PC-3 (cell line): ENCODE measurements at regions of chr11 and their contacts with region 1.

Region 1: GRCh38 chr11:18650859-18651557 is 16.9 kb upstream of the SPTY2D1 start:
- DNase-seq: peak; percentile 62
- ATAC-seq: peak; percentile 51; the same call in 1 of the 2 replicates
- H3K4me3 ChIP-seq: no peak overlapping the region
- H3K27ac ChIP-seq: no peak overlapping the region
- H3K4me1 ChIP-seq: no peaks in the 10 kb centered on the region
- H3K27me3 ChIP-seq: no peaks in the 10 kb centered on the region
- CTCF ChIP-seq: peak; percentile 70

Region 2: DNA sequence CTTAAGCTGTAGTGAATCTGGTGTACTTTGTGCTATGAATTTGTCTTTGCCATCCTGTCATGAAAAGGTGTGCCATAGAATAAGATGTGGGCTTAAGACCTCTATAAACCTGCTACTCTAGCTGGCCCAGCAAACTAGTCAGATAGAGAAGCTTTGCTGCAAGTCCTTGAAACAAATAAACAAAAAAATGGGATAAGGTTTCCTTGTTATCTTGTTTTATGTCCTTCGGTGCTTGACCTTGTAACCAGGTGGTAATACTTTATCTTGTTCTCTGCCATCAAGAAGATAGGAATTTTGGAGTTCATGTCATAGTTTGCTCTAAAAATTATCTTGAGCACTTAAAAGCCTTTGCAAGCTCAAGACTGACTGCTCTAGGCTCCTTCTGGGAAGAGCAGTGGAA is 33.3 kb after region 1 on chr11:
- CTCF ChIA-PET with region 1: no interaction called
- POLR2A ChIA-PET with region 1: interaction called, 10 read pairs
- intact Hi-C with region 1: no loop called
- DNase-seq: no peak
- ATAC-seq: no peak
- H3K4me3 ChIP-seq: no peak overlapping the region
- H3K27ac ChIP-seq: no peak overlapping the region
- H3K4me1 ChIP-seq: peaks cover 12% of the 10 kb centered on the region; the same call in 1 of the 2 replicates
- H3K27me3 ChIP-seq: no peaks in the 10 kb centered on the region
- CTCF ChIP-seq: no peak

Region 3: DNA sequence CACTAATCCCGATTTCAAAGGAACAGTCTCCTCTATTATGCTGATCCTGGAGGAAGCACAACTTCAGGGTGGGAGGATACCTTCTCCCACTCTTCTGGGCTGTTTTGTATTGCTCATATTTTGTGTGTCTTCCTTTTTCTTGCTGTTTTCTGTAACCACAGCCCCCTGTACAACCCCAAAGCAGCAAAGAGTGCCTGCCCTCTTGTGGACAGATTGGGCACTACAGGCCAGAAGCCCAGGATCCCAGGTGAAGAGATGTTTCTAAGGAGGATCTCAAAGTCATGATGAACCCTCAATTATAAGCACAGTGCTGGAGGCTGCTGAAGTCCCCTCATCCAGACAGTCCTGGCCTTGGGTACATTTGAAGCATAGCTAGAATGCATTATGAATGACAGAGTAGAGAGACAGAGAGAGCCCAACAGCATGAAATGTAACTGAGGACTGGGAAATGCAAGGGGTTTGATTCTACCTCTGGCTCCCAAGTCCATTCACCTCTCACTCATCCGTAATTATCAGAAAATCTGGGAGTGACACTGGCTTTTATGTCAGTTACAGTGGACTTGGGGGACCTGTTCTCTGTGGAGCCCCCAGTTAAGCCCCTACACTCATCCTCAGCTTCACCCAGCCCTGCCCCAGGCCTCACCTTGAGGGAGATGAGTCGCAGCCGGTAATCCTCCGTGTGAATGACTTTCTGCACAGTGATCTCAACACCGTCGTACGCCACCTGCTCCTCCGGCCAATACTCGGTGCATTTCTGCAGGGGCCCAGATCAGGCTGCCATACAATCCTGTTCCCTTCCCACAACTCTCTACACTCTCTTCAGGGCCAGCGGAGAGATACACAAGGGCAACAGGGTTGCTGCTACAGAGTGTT is 81.2 kb after region 1 on chr11:
- CTCF ChIA-PET with region 1: interaction called, 12 read pairs
- POLR2A ChIA-PET with region 1: no interaction called
- intact Hi-C with region 1: no loop called
- DNase-seq: peak; percentile 70
- ATAC-seq: peak; percentile 81
- H3K4me3 ChIP-seq: no peak overlapping the region
- H3K27ac ChIP-seq: no peak overlapping the region
- H3K4me1 ChIP-seq: no peaks in the 10 kb centered on the region; the same call in 1 of the 2 replicates
- H3K27me3 ChIP-seq: no peaks in the 10 kb centered on the region
- CTCF ChIP-seq: peak; percentile 96

Region 4: DNA sequence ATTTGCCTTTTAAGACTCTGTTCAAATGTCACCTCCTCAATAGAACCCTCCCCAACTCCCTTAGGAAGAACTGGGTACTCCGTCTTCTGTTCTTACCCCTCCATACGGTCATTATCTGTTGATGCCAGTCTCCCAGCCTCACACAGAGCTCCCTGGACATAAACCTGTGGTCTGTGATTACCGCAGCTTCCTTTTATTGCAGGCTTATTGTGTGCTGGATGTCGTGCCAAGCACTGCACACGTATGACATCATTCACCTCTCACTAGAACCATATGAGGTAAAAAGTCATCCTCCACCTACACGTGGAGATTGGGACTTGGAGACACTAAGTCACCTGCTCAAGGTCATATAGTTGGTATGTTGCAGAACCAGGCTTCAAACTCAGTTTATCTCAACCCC is 125.3 kb after region 1 on chr11:
- CTCF ChIA-PET with region 1: no interaction called
- POLR2A ChIA-PET with region 1: no interaction called
- intact Hi-C with region 1: no loop called
- DNase-seq: no peak
- ATAC-seq: no peak
- H3K4me3 ChIP-seq: no peak overlapping the region
- H3K27ac ChIP-seq: no peak overlapping the region
- H3K4me1 ChIP-seq: 0 out of 2 replicates have a peak, but pooled peaks cover 5% of the 10 kb centered on the region
- H3K27me3 ChIP-seq: no peaks in the 10 kb centered on the region
- CTCF ChIP-seq: no peak

Region 5: GRCh38 chr11:19419021-19419750 is 768.2 kb after region 1 on chr11:
- CTCF ChIA-PET with region 1: no interaction called
- POLR2A ChIA-PET with region 1: no interaction called
- intact Hi-C with region 1: no loop called
- DNase-seq: peak; percentile 32
- ATAC-seq: no peak
- H3K4me3 ChIP-seq: no peak overlapping the region
- H3K27ac ChIP-seq: peak overlapping the region; percentile 35; the same call in 1 of the 2 replicates
- H3K4me1 ChIP-seq: peaks cover 12% of the 10 kb centered on the region; the same call in 1 of the 2 replicates
- H3K27me3 ChIP-seq: no peaks in the 10 kb centered on the region
- CTCF ChIP-seq: no peak